B cell (primary cell): ENCODE measurements at regions of chr5 and their contacts with region 1.

Region 1: GRCh38 chr5:144203750-144204596 is 33.3 kb downstream of the KCTD16 start:
- DNase-seq: peak; percentile 72
- ATAC-seq: peak; percentile 67
- H3K4me3 ChIP-seq: no peak overlapping the region
- H3K4me3 Mint-ChIP-seq: no peak overlapping the region
- H3K27ac ChIP-seq: no peak overlapping the region
- H3K27ac Mint-ChIP-seq: no peak overlapping the region
- H3K4me1 ChIP-seq: no peaks in the 10 kb centered on the region
- H3K4me1 Mint-ChIP-seq: no peaks in the 10 kb centered on the region
- H3K27me3 ChIP-seq: peaks cover 0 to 25% (median 17%) of the 10 kb centered on the region in 4 experiments
- H3K27me3 Mint-ChIP-seq: peaks cover 70% of the 10 kb centered on the region
- CTCF ChIP-seq: peak; percentile 95

Region 2: DNA sequence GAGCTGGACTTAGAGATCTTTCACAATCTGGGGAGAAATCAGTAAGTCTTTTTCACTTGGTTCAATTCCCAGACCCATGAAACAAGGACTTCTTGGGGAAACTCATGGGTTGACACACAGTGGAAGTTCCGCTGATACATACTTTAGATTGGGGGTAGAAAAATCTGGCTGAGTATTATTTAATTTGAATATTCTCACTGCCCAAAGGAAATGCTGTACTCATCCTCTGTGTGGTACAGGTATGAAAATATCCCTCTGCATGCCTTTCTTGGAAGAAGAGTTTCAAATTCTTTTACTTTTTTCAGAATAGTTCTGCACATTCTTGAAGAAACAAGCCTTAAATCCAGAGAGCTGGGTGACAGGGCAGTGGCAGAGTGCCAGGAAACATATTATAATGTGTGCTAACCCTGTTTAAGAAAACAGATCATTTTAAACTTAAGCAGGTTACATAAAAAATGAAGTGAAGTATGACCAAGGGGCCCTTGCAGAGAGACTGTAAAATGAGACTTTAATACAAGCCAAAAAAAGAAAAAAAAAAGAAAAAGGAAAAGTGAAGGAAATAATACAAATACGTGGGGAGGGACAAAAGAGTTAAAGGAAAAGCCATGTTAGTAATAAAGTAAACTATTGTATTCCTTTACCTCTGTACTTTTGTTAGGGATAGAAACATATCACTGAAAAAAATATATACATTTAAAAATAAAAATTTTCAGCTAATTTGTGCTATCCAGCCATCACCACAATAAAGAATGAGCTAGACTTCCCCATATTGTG is 627.1 kb before region 1 on chr5:
- CTCF ChIA-PET with region 1: no interaction called
- POLR2A ChIA-PET with region 1: no interaction called
- intact Hi-C with region 1: no loop called
- DNase-seq: no peak
- ATAC-seq: no peak
- H3K4me3 ChIP-seq: no peak overlapping the region
- H3K4me3 Mint-ChIP-seq: no peak overlapping the region
- H3K27ac ChIP-seq: no peak overlapping the region
- H3K27ac Mint-ChIP-seq: no peak overlapping the region
- H3K4me1 ChIP-seq: peaks cover 0 to 5% of the 10 kb centered on the region in 2 donors
- H3K4me1 Mint-ChIP-seq: peaks cover 12% of the 10 kb centered on the region
- H3K27me3 ChIP-seq: no peaks in the 10 kb centered on the region
- H3K27me3 Mint-ChIP-seq: no peaks in the 10 kb centered on the region
- CTCF ChIP-seq: no peak

Region 3: DNA sequence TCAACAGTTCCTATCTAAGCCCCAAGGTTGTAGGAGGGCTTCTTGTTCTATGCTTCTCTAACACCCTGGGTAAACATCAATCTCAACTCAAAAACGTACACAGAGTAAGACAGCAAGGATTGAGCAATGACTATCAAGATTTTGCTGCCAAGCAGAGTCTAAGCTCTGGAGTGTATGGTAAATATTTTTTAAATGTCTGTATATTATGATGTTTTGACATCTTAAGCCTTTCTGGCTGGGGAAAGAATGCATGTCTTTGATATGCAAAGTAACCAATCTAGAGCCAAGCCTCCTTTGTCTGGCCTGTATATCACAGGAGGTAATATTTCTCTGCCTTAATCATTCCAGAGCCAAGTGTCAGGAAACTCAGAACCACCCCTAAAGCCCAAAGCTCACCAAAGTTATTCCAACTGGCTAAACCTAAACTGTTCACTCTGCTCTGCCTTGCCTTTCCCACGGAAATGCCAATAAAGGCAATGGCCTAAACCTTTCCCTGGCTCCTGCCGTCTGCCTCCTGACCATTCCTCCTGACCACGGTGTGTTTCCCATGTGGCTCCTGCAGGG is 78.7 kb before region 1 on chr5:
- CTCF ChIA-PET with region 1: no interaction called
- POLR2A ChIA-PET with region 1: no interaction called
- intact Hi-C with region 1: no loop called
- DNase-seq: no peak
- ATAC-seq: no peak
- H3K4me3 ChIP-seq: no peak overlapping the region
- H3K4me3 Mint-ChIP-seq: no peak overlapping the region
- H3K27ac ChIP-seq: no peak overlapping the region
- H3K27ac Mint-ChIP-seq: no peak overlapping the region
- H3K4me1 ChIP-seq: no peaks in the 10 kb centered on the region
- H3K4me1 Mint-ChIP-seq: no peaks in the 10 kb centered on the region
- H3K27me3 ChIP-seq: peaks cover 0 to 3% (median 0%) of the 10 kb centered on the region in 4 experiments
- H3K27me3 Mint-ChIP-seq: peaks cover 9% of the 10 kb centered on the region
- CTCF ChIP-seq: no peak

Region 4: GRCh38 chr5:146130440-146131045 is 1926.6 kb after region 1 on chr5:
- CTCF ChIA-PET with region 1: interaction called, 15 read pairs
- POLR2A ChIA-PET with region 1: no interaction called
- intact Hi-C with region 1: no loop called
- DNase-seq: peak; percentile 14
- ATAC-seq: no peak
- H3K4me3 ChIP-seq: no peak overlapping the region
- H3K4me3 Mint-ChIP-seq: no peak overlapping the region
- H3K27ac ChIP-seq: no peak overlapping the region
- H3K27ac Mint-ChIP-seq: no peak overlapping the region
- H3K4me1 ChIP-seq: no peaks in the 10 kb centered on the region
- H3K4me1 Mint-ChIP-seq: no peaks in the 10 kb centered on the region
- H3K27me3 ChIP-seq: no peaks in the 10 kb centered on the region
- H3K27me3 Mint-ChIP-seq: no peaks in the 10 kb centered on the region
- CTCF ChIP-seq: peak; percentile 66